Activated CD4-positive, alpha-beta T cell treated with anti-CD3 and anti-CD28 coated beads, Interleukin-2, amount 10 ng/mL, durations not matched to agents 24 days and 14 days (primary cell): ENCODE measurements at regions of chr7 and their contacts with region 1.

Region 1: GRCh38 chr7:134646425-134647305 is at the start of gene BPGM:
- DNase-seq: peak; percentile 99
- H3K4me3 Mint-ChIP-seq: no peak within 1 kb of the TSS
- H3K27ac Mint-ChIP-seq: no peak within 1 kb of the TSS
- H3K4me1 Mint-ChIP-seq: peaks cover 27% of the 10 kb centered on the region
- H3K27me3 Mint-ChIP-seq: no peaks in the 10 kb centered on the region
- total RNA-seq, gene BPGM: 22.3 and 22.6 TPM in 2 replicates

Region 2: GRCh38 chr7:134562136-134562535 is 84.5 kb before region 1 on chr7:
- intact Hi-C with region 1: no loop called
- DNase-seq: no peak
- H3K4me3 Mint-ChIP-seq: no peak overlapping the region
- H3K27ac Mint-ChIP-seq: no peak overlapping the region
- H3K4me1 Mint-ChIP-seq: no peaks in the 10 kb centered on the region
- H3K27me3 Mint-ChIP-seq: no peaks in the 10 kb centered on the region

Region 3: GRCh38 chr7:134613623-134614347 is 32.9 kb before region 1 on chr7:
- intact Hi-C with region 1: loop called (anchors 2 kb)
- DNase-seq: peak; percentile 64
- H3K4me3 Mint-ChIP-seq: no peak overlapping the region
- H3K27ac Mint-ChIP-seq: peak overlapping the region; percentile 85
- H3K4me1 Mint-ChIP-seq: peaks cover 12% of the 10 kb centered on the region
- H3K27me3 Mint-ChIP-seq: peaks cover 26% of the 10 kb centered on the region

Region 4: GRCh38 chr7:134686786-134687185 is 40.1 kb after region 1 on chr7:
- intact Hi-C with region 1: no loop called
- DNase-seq: no peak
- H3K4me3 Mint-ChIP-seq: no peak overlapping the region
- H3K27ac Mint-ChIP-seq: no peak overlapping the region
- H3K4me1 Mint-ChIP-seq: peaks cover 6% of the 10 kb centered on the region
- H3K27me3 Mint-ChIP-seq: no peaks in the 10 kb centered on the region

Region 5: GRCh38 chr7:134710859-134711624 is 64.4 kb after region 1 on chr7:
- intact Hi-C with region 1: loop called (anchors 2 kb)
- DNase-seq: peak; percentile 85
- H3K4me3 Mint-ChIP-seq: peak overlapping the region; percentile 74
- H3K27ac Mint-ChIP-seq: peak overlapping the region; percentile 93
- H3K4me1 Mint-ChIP-seq: peaks cover 20% of the 10 kb centered on the region
- H3K27me3 Mint-ChIP-seq: peaks cover 2% of the 10 kb centered on the region

Region 6: DNA sequence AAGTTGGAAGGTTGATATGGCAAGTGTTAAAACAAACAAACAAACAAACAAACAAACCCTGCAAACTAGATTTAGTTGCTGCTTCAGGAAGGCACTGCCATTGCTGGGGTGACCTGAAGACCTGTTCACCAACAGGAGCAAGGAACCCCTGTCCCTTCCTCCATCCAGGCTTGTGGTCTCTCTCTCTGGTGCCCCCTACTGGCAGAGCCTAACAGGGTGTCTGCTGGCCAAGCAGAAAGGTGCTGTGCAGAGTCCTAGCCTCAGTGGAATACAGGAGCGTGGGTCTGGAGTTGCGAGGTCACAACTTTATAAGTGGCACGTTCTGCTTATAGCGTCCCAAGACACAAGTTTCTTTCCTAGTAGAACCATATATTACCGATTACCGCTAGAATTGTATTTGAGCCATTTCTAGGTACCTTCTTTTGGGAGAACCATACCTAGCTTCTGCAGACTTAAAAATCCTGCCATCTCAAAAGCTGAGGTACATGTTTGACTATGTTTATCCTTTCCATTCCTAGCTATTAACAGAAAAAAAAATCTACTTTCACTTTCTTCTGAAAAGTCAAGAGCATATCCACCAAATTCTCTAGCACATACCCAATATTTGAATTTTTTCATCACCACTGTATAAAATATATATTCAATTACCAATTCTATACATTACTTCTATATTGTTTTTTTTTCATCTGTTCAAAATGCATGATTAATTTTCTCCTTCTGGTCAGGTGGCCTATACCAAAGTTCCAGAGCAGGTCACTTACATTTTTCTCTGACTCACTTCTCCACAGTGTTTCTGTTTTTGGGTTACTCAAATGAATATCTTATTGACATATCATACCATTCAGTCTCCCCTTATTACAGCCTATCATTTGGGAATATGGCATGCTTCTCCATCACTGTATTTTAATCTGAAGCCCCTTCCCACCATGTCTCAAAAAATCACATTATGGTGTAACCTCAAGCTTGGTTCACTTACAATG is 103.7 kb after region 1 on chr7:
- intact Hi-C with region 1: loop called (anchors 5 kb)
- DNase-seq: peak; percentile 85
- H3K4me3 Mint-ChIP-seq: no peak overlapping the region
- H3K27ac Mint-ChIP-seq: peak overlapping the region; percentile 74
- H3K4me1 Mint-ChIP-seq: peaks cover 8% of the 10 kb centered on the region
- H3K27me3 Mint-ChIP-seq: peaks cover 1% of the 10 kb centered on the region

Region 7: GRCh38 chr7:135170274-135170997 is 523.8 kb after region 1 on chr7 and contains the start of gene CYREN:
- intact Hi-C with region 1: loop called (anchors 1 kb)
- DNase-seq: peak; percentile 96
- H3K4me3 Mint-ChIP-seq: peak within 1 kb of the TSS; percentile 96
- H3K27ac Mint-ChIP-seq: peak within 1 kb of the TSS; percentile 95
- H3K4me1 Mint-ChIP-seq: peaks cover 46% of the 10 kb centered on the region
- H3K27me3 Mint-ChIP-seq: no peaks in the 10 kb centered on the region
- total RNA-seq, gene CYREN: 52.8 and 55.1 TPM in 2 replicates

Region 8: GRCh38 chr7:135509903-135510602 is 863.4 kb after region 1 on chr7 and contains the start of gene CNOT4:
- intact Hi-C with region 1: loop called (anchors 5 kb)
- DNase-seq: peak; percentile 97
- H3K4me3 Mint-ChIP-seq: no peak within 1 kb of the TSS
- H3K27ac Mint-ChIP-seq: no peak within 1 kb of the TSS
- H3K4me1 Mint-ChIP-seq: peaks cover 13% of the 10 kb centered on the region
- H3K27me3 Mint-ChIP-seq: no peaks in the 10 kb centered on the region
- total RNA-seq, gene CNOT4: 21.1 and 26.3 TPM in 2 replicates

Region 9: GRCh38 chr7:135977007-135977741 is 1330.5 kb after region 1 on chr7 and contains the start of gene MTPN:
- intact Hi-C with region 1: loop called (anchors 10 kb)
- DNase-seq: peak; percentile 99
- H3K4me3 Mint-ChIP-seq: peak within 1 kb of the TSS; percentile 95
- H3K27ac Mint-ChIP-seq: peak within 1 kb of the TSS; percentile 86
- H3K4me1 Mint-ChIP-seq: peaks cover 61% of the 10 kb centered on the region
- H3K27me3 Mint-ChIP-seq: no peaks in the 10 kb centered on the region
- total RNA-seq, gene MTPN: 121 and 126 TPM in 2 replicates